CD4-positive, alpha-beta T cell (primary cell): ENCODE measurements at regions of chr7 and their contacts with region 1.

Region 1: DNA sequence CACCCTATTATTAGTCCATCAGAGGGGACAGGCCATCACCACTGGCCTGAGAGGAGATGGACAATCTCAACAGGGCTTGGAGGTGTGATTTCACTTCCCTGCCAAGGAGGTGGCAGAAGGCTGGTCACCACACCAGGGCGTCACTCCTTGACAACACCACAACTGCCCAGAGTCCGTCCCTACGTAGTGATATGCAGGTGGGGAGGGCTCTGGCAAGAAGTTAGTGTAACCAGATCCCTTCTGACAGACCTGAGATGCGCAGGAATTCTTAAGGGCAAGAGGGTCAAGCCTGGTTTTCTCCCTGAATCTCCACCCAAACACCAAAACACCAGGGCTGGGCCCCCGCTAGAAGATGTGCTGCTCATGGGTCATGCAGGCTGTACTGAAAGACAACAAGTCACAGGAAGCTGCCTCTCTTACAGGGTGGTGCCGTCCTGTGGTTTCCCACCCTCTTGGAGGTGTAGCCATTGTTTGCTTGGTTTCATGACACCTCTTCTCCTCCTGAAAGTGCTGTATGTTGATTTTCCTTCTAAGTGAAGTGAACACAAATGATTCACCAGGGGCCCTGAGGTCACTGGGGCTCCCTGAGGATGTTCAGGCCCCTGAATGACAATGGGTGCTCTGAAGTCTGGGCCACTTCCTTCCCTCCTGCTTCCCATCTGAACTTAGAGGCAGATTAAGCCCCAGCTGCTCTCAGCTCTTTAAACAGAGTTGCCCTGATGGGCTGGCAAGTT is 27.1 kb downstream of the ATXN7L1 start:
- DNase-seq: peak; percentile 20 to 91 (median 62)
- ATAC-seq: peak; percentile 89
- H3K4me3 ChIP-seq: peak overlapping the region; percentile 15
- H3K4me3 Mint-ChIP-seq: peak overlapping the region; percentile 78
- H3K27ac ChIP-seq: peak overlapping the region; percentile 48 to 59
- H3K27ac Mint-ChIP-seq: peak overlapping the region; percentile 90
- H3K4me1 ChIP-seq: peaks cover 51% of the 10 kb centered on the region
- H3K4me1 Mint-ChIP-seq: peaks cover 69% of the 10 kb centered on the region
- H3K27me3 ChIP-seq: no peaks in the 10 kb centered on the region
- H3K27me3 Mint-ChIP-seq: no peaks in the 10 kb centered on the region
- CTCF ChIP-seq: no peak

Region 2: DNA sequence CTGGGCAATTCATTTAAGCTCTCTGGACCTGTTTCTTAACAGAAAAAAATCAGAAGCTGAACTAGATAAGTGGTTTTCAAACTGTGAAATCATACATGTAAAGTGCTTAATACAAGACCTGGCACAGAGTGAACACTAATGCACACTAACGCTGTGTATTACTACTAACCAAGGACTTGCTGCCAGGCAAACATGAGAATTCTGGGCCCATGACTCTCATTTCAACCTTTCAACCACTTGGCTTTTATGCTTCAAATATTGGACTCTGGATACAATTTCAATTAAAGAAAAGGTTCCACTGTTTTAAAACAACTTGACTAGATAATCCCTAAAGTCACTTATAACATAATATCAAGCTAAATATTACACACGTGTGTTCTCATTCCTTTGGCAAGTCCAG is 533.9 kb before region 1 on chr7:
- CTCF ChIA-PET with region 1: no interaction called
- POLR2A ChIA-PET with region 1: no interaction called
- intact Hi-C with region 1: no loop called
- DNase-seq: no peak
- ATAC-seq: no peak
- H3K4me3 ChIP-seq: no peak overlapping the region
- H3K4me3 Mint-ChIP-seq: no peak overlapping the region
- H3K27ac ChIP-seq: no peak overlapping the region
- H3K27ac Mint-ChIP-seq: no peak overlapping the region
- H3K4me1 ChIP-seq: peaks cover 3% of the 10 kb centered on the region
- H3K4me1 Mint-ChIP-seq: peaks cover 62% of the 10 kb centered on the region
- H3K27me3 ChIP-seq: no peaks in the 10 kb centered on the region
- H3K27me3 Mint-ChIP-seq: no peaks in the 10 kb centered on the region
- CTCF ChIP-seq: no peak

Region 3: DNA sequence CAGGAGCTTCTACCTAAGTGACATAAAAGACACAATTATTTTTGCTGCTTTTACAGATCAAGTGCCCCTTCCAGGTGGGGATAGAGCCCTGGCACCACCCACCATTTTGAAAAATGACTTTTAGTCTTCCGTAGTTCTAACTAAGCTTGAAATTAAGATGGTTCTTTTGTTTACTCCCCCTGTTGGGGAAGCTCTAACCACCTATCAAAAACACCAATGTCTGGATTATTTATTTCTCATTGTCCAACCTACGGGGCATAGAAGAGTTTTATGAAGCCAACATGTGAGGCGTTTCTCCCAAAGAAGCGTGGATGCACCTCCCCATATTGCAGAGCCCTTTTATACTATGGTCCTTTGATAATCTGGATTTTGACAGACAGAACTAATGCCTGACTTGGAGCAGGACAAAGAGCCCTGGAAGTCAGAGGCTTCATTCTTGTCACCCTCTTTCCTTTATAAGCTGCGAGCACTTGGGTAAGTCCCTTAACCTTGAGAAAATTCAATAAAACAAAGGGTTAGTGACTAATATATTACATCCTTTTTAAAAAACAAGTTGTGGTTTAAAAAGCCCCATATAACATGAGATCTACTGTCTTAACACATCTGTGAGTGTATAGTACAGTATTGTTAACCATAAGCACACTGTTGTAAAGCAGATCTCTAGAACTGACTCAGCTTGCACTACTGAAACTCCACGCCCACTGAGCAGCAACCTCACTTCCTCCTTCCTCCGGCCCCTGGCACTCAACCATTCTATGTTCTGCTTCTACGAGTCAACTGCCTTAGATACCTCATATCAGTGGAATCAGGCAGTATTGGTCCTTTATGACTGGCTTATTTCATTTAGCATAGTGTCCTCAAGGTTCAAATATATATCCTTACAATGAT is 40.3 kb before region 1 on chr7:
- CTCF ChIA-PET with region 1: interaction called, 4 read pairs
- POLR2A ChIA-PET with region 1: interaction called, 8 read pairs
- intact Hi-C with region 1: loop called in 1 of 2 experiments (anchors 2 kb)
- DNase-seq: peak; percentile 33 to 86 (median 64)
- ATAC-seq: peak; percentile 95
- H3K4me3 ChIP-seq: no peak overlapping the region
- H3K4me3 Mint-ChIP-seq: peak overlapping the region; percentile 4
- H3K27ac ChIP-seq: peak overlapping the region; percentile 37 to 77
- H3K27ac Mint-ChIP-seq: peak overlapping the region; percentile 67
- H3K4me1 ChIP-seq: peaks cover 48% of the 10 kb centered on the region
- H3K4me1 Mint-ChIP-seq: peaks cover 74% of the 10 kb centered on the region
- H3K27me3 ChIP-seq: no peaks in the 10 kb centered on the region
- H3K27me3 Mint-ChIP-seq: no peaks in the 10 kb centered on the region
- CTCF ChIP-seq: no peak

Region 4: DNA sequence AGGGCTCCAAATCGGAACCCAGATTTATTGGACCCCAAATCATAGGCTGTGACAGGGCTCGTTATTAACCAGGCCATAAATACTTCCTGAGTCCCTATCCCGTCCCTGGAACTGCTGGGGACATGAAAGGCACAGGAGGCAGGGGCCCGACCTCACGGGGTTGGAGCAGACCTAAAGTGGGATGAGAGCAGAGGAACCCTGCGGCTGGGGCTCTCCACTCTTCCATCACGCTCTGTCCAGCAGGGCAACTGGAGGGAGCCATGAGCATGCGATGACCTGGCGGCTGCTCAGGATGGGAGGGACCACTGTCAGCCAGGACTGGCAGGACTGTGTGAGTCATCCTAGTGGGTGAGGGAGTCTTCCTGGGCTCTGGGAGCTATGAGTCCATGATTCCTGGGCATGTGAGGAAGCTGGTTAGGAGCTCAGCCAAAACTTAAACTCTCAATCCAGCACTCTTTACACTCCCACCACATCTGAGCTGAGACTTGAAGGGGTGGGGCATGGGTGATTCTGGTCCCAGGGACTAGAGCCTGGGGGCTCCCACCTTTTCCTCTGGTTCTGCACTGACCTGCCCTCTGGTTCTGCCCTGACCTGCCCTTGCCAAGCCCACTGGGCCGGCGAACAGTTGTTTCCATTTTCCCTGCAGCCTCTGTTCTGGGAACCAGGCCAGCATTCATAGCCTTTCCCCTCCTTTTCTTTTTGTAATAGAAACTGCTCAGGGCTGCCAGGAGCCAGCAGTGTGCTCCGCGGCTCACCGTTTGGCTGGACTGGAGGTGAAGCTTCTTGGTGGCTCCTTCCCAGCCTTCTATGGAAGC is 215.7 kb after region 1 on chr7:
- CTCF ChIA-PET with region 1: no interaction called
- POLR2A ChIA-PET with region 1: no interaction called
- intact Hi-C with region 1: no loop called
- DNase-seq: no peak
- ATAC-seq: no peak
- H3K4me3 ChIP-seq: no peak overlapping the region
- H3K4me3 Mint-ChIP-seq: no peak overlapping the region
- H3K27ac ChIP-seq: no peak overlapping the region
- H3K27ac Mint-ChIP-seq: no peak overlapping the region
- H3K4me1 ChIP-seq: peaks cover 3% of the 10 kb centered on the region
- H3K4me1 Mint-ChIP-seq: peaks cover 23% of the 10 kb centered on the region
- H3K27me3 ChIP-seq: no peaks in the 10 kb centered on the region
- H3K27me3 Mint-ChIP-seq: no peaks in the 10 kb centered on the region
- CTCF ChIP-seq: no peak